ENCODE measurements at regions of chr1 and their contacts with region 1.

Region 1: GRCh38 chr1:174074757-174075156 is 52.6 kb upstream of the RC3H1 start:
- DNase-seq: peak in 2 of 4 experiments; percentile 30 to 34
- ATAC-seq: peak; percentile 54; the same call in 2 of the 3 replicates
- H3K4me3 ChIP-seq: no peak overlapping the region
- H3K27ac ChIP-seq: peak overlapping the region; percentile 14; the same call in 1 of the 3 replicates
- H3K4me1 ChIP-seq: peaks cover 0 to 7% of the 10 kb centered on the region in 2 experiments; a peak in 2 of 5 replicates
- H3K27me3 ChIP-seq: no peaks in the 10 kb centered on the region
- CTCF ChIP-seq: peak in 2 of 3 experiments; percentile 45 to 81; a peak in 4 of 6 replicates
- EP300 ChIP-seq: 0 out of 2 replicates have a peak, but pooled peaks have one; percentile 7
- POLR2A ChIP-seq: no peak
- RAD21 ChIP-seq: peak; percentile 80 to 87

Region 2: GRCh38 chr1:173255214-173255813 is 819.4 kb before region 1 on chr1:
- CTCF ChIA-PET with region 1: no interaction called
- POLR2A ChIA-PET with region 1: no interaction called
- in situ Hi-C with region 1: no loop called
- intact Hi-C with region 1: loop called (anchors 10 kb)
- DNase-seq: peak; percentile 60 to 77 (median 66)
- ATAC-seq: peak; percentile 87
- H3K4me3 ChIP-seq: no peak overlapping the region
- H3K27ac ChIP-seq: no peak overlapping the region
- H3K4me1 ChIP-seq: peaks cover 0 to 7% of the 10 kb centered on the region in 2 experiments; a peak in 1 of 5 replicates
- H3K27me3 ChIP-seq: no peaks in the 10 kb centered on the region
- CTCF ChIP-seq: peak; percentile 51 to 92 (median 77); a peak in 5 of 6 replicates
- EP300 ChIP-seq: no peak; the same call in 1 of the 2 replicates
- POLR2A ChIP-seq: no peak
- RAD21 ChIP-seq: peak; percentile 72 to 89

Region 3: DNA sequence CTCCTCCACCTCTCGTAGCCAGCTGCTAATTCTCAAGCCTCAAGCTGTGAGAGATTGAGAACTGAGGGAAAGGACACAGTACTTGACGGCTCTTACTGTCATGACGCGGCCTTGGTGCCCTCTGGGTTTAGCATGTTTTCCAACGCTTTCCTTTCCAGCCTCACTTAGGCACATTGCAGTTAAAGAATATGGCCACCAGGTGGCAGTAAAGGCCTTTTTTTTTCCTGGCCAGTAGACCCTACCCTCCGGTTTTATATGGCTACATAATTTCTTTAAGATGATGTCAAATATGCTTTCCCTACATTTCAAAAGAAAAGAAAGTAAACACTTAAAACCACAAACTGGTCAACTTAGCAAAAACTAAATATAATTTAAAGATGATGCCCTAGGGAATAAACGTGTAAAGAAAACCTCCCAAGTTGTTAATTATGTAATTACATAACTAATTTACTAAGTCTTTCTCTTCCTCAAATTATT is 654.4 kb before region 1 on chr1:
- CTCF ChIA-PET with region 1: interaction called, 6 read pairs
- POLR2A ChIA-PET with region 1: no interaction called
- in situ Hi-C with region 1: loop called (anchors 10 kb)
- intact Hi-C with region 1: loop called (anchors 1 kb)
- DNase-seq: peak; percentile 67 to 90 (median 78)
- ATAC-seq: peak; percentile 85
- H3K4me3 ChIP-seq: no peak overlapping the region
- H3K27ac ChIP-seq: peak overlapping the region; percentile 4; the same call in 1 of the 3 replicates
- H3K4me1 ChIP-seq: peaks cover 4 to 40% of the 10 kb centered on the region in 2 experiments; a peak in 4 of 5 replicates
- H3K27me3 ChIP-seq: no peaks in the 10 kb centered on the region
- CTCF ChIP-seq: peak; percentile 77 to 96 (median 86)
- EP300 ChIP-seq: no peak; the same call in 1 of the 2 replicates
- POLR2A ChIP-seq: no peak
- RAD21 ChIP-seq: peak; percentile 98

Region 4: DNA sequence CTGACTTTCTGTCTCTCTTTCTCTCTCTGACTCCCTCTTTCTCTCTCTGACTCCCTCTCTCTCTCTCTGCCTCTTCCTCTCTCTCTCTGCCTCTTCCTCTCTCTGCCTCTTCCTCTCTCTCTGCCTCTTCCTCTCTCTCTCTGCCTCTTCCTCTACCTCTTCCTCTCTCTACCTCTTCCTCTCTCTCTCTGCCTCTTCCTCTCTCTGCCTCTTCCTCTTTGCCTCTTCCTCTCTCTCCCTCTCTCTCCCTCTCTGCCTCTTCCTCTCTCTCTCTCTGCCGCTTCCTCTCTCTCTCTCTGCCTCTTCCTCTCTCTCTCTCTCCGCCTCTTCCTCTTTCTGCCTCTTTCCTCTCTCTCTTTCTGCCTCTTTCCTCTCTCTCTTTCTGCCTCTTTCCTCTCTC is 386.5 kb before region 1 on chr1:
- CTCF ChIA-PET with region 1: no interaction called
- POLR2A ChIA-PET with region 1: no interaction called
- in situ Hi-C with region 1: no loop called
- intact Hi-C with region 1: loop called (anchors 5 kb)
- DNase-seq: no peak
- ATAC-seq: no peak
- H3K4me3 ChIP-seq: no peak overlapping the region
- H3K27ac ChIP-seq: no peak overlapping the region
- H3K4me1 ChIP-seq: peaks cover 7 to 9% of the 10 kb centered on the region in 2 experiments; a peak in 4 of 5 replicates
- H3K27me3 ChIP-seq: no peaks in the 10 kb centered on the region
- CTCF ChIP-seq: no peak
- EP300 ChIP-seq: no peak
- POLR2A ChIP-seq: no peak
- RAD21 ChIP-seq: no peak

Region 5: GRCh38 chr1:173867753-173868265 is 206.9 kb before region 1 on chr1 and contains the start of gene GAS5:
- CTCF ChIA-PET with region 1: no interaction called
- POLR2A ChIA-PET with region 1: no interaction called
- in situ Hi-C with region 1: no loop called
- intact Hi-C with region 1: loop called (anchors 2 kb)
- DNase-seq: peak; percentile 91 to 100 (median 94)
- ATAC-seq: peak; percentile 85
- H3K4me3 ChIP-seq: peak within 1 kb of the TSS; percentile 86
- H3K27ac ChIP-seq: peak within 1 kb of the TSS; percentile 95
- H3K4me1 ChIP-seq: peaks cover 17 to 34% of the 10 kb centered on the region in 2 experiments
- H3K27me3 ChIP-seq: no peaks in the 10 kb centered on the region; a peak in 1 of 5 replicates
- CTCF ChIP-seq: no peak
- EP300 ChIP-seq: peak; percentile 16; the same call in 1 of the 2 replicates
- POLR2A ChIP-seq: peak; percentile 100
- RAD21 ChIP-seq: peak in 1 of 2 experiments; percentile 13; a peak in 1 of 4 replicates
- polyA plus RNA-seq, gene GAS5: 891 to 1,006 TPM

Region 6: DNA sequence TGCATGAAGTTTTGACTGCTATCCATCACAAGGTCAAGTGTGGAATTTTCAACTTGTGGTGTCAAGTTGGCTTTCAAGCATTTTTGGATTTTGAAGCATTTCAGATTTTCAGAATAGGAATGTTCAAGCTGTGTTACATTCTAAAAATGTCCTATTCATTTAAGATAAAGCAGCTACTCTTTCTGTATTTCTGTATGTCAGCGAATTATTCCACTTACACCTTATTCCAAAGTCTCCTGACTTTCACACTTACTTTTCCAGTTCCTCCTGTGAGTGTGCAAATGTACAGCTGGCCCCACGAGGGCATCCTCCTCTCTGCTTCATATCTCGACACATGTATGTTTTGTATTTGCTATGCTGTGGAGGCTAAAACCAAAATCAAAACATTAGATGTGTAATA is 104.5 kb before region 1 on chr1:
- CTCF ChIA-PET with region 1: no interaction called
- POLR2A ChIA-PET with region 1: no interaction called
- in situ Hi-C with region 1: no loop called
- intact Hi-C with region 1: loop called (anchors 5 kb)
- DNase-seq: no peak
- ATAC-seq: no peak
- H3K4me3 ChIP-seq: no peak overlapping the region
- H3K27ac ChIP-seq: no peak overlapping the region
- H3K4me1 ChIP-seq: no peaks in the 10 kb centered on the region
- H3K27me3 ChIP-seq: no peaks in the 10 kb centered on the region
- CTCF ChIP-seq: no peak
- EP300 ChIP-seq: no peak
- POLR2A ChIP-seq: no peak
- RAD21 ChIP-seq: no peak